Activated CD4-positive, alpha-beta memory T cell treated with anti-CD3 and anti-CD28 coated beads for 36 hours (primary cell): ENCODE measurements at regions of chr18 and their contacts with region 1.

Region 1: DNA sequence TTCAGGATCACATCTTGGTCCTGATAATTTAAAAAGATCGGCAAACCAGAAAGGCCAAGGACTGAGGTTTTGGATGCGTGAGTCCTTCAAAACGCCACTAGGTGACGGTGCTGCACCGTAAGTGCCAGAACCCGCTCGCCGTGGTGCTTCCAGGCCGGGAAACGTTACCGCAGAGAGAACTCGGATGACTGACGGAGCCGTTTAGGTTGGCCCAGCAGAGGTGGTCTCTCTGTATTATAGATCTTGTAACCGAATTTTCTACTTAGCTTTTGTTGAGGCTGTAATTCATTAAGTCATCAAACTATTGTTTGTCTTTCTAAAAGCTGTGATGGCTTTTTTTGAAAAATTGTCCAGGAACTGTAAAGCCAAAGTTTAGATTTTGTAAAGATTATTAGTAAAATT is 39.8 kb upstream of the ADCYAP1 start:
- DNase-seq: peak; percentile 77
- H3K4me3 Mint-ChIP-seq: no peak overlapping the region
- H3K27ac Mint-ChIP-seq: no peak overlapping the region
- H3K4me1 Mint-ChIP-seq: peaks cover 4% of the 10 kb centered on the region
- H3K27me3 Mint-ChIP-seq: peaks cover 10% of the 10 kb centered on the region

Region 2: DNA sequence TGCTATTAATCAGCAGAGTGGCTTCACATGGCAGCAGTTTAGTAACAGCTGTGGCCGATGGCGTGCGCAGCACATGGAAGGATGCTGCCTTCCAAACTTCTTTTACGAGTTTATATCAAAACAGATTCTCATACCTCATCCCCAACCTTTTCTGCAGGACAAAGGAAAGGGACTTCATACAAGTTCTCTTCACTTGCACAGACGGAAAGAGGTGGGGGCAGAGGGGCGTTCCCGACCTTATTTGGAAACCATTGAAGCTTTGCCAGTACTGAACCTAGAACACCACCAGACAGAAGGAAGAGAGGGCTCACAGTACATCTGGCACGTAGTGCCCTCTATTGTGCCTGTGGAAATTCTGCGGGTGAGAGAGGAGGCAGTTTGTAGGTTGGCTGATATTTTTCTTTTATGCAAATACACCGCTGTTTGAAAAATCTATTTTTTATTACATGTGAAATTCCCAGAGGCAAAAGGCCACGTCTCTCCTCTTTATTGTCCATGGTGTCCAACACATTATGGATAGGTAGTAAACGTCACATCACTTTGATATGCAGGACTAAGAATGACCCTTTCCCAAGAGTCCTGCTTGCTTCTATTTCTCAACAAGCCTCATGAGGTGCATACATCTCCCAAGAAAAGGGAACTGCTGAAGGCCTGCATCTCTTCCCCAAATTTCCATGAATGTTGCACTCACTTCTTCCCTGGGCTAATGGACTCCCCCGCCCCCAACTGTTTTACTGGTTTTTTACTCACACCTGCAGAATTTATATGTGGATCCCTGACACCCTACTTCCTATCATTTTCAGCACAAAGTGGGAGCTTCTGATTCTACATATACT is 395.7 kb before region 1 on chr18:
- CTCF ChIA-PET with region 1: no interaction called
- POLR2A ChIA-PET with region 1: no interaction called
- intact Hi-C with region 1: no loop called
- DNase-seq: no peak
- H3K4me3 Mint-ChIP-seq: no peak overlapping the region
- H3K27ac Mint-ChIP-seq: no peak overlapping the region
- H3K4me1 Mint-ChIP-seq: no peaks in the 10 kb centered on the region
- H3K27me3 Mint-ChIP-seq: peaks cover 15% of the 10 kb centered on the region

Region 3: GRCh38 chr18:744832-745597 is 119.9 kb before region 1 on chr18:
- CTCF ChIA-PET with region 1: no interaction called
- POLR2A ChIA-PET with region 1: no interaction called
- intact Hi-C with region 1: no loop called
- DNase-seq: no peak
- H3K4me3 Mint-ChIP-seq: no peak overlapping the region
- H3K27ac Mint-ChIP-seq: no peak overlapping the region
- H3K4me1 Mint-ChIP-seq: no peaks in the 10 kb centered on the region
- H3K27me3 Mint-ChIP-seq: no peaks in the 10 kb centered on the region

Region 4: GRCh38 chr18:961644-962355 is 96.9 kb after region 1 on chr18:
- CTCF ChIA-PET with region 1: interaction called, 23 read pairs
- POLR2A ChIA-PET with region 1: no interaction called
- intact Hi-C with region 1: loop called (anchors 1 kb)
- DNase-seq: peak; percentile 60
- H3K4me3 Mint-ChIP-seq: no peak overlapping the region
- H3K27ac Mint-ChIP-seq: no peak overlapping the region
- H3K4me1 Mint-ChIP-seq: peaks cover 8% of the 10 kb centered on the region
- H3K27me3 Mint-ChIP-seq: peaks cover 14% of the 10 kb centered on the region

Region 5: GRCh38 chr18:1150344-1150743 is 285.5 kb after region 1 on chr18:
- CTCF ChIA-PET with region 1: no interaction called
- POLR2A ChIA-PET with region 1: no interaction called
- intact Hi-C with region 1: no loop called
- DNase-seq: no peak
- H3K4me3 Mint-ChIP-seq: no peak overlapping the region
- H3K27ac Mint-ChIP-seq: no peak overlapping the region
- H3K4me1 Mint-ChIP-seq: no peaks in the 10 kb centered on the region
- H3K27me3 Mint-ChIP-seq: no peaks in the 10 kb centered on the region